PC-3 (cell line): ENCODE measurements at regions of chr5 and their contacts with region 1.

Region 1: DNA sequence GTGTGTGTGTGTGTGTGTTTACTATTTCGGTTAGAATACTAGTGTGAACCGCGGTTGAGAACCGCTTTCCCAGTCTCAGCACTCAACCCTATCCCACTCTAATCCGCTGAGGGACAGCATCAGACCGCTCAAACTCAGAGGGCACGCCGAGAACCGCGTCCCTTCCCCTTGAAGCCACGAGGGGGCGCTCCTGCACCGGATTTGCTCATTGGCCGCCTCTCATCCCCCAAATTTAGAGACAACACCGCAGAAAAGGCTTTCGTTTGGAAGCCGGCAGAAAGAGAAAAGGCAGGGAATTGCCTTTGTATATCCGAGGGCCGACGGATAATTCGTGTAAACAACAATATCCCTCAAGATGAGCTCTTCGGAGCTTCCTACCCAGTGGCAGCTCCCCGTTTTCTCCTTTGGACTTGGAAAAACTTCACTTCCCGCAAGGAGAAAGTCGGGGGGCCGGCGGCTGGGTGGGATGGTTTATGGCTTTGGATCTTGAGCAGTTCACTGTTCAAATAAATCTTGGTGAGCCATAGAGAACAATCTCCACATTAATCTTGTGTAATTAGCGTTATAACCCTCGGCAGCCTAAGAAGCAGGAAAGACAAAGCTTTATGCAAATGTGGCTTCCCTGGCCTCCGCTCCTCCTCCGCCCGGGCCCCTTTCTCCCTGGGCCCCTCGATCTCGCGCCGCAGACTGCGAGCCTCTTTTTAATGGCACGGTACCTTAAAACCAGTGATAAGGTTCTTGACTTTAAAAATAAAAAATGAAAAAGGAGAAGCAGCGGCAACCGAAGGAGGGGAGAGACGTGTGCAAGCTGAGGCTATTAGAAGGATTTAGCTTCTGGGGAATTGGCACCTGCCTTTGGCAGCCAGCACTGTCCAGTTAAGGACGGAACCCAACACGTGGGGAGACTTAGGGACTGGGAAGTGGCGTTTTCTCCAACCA is 296.8 kb downstream of the PARP8 start:
- DNase-seq: peak; percentile 56
- ATAC-seq: peak; percentile 95
- H3K4me3 ChIP-seq: peak overlapping the region; percentile 69
- H3K27ac ChIP-seq: no peak overlapping the region
- H3K4me1 ChIP-seq: no peaks in the 10 kb centered on the region
- H3K27me3 ChIP-seq: peaks cover under 1% of the 10 kb centered on the region; the same call in 1 of the 2 replicates
- CTCF ChIP-seq: peak; percentile 88

Region 2: GRCh38 chr5:51047369-51047768 is 84.2 kb after region 1 on chr5:
- CTCF ChIA-PET with region 1: no interaction called
- POLR2A ChIA-PET with region 1: no interaction called
- intact Hi-C with region 1: no loop called
- DNase-seq: no peak
- ATAC-seq: no peak
- H3K4me3 ChIP-seq: no peak overlapping the region
- H3K27ac ChIP-seq: no peak overlapping the region
- H3K4me1 ChIP-seq: no peaks in the 10 kb centered on the region
- H3K27me3 ChIP-seq: no peaks in the 10 kb centered on the region
- CTCF ChIP-seq: no peak

Region 3: DNA sequence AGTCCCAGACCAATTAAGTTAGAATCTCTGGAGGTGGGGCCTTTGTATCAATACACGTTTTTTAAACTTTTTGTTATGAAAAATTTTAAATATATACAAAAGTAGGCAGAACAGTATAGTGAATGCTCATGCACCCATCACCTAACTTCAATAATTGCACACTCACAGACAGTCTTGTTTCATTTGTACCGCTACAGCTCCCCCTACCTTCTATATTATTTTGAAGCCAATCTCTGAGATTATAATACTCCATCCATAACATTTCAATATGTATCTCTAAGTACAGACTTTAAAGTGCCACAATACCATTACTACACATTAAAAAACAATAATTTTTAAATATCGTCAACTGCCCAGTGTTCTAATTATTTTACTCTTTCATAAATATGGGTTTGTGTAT is 452.9 kb after region 1 on chr5:
- CTCF ChIA-PET with region 1: no interaction called
- POLR2A ChIA-PET with region 1: no interaction called
- intact Hi-C with region 1: loop called (anchors 5 kb)
- DNase-seq: peak; percentile 26
- ATAC-seq: peak; percentile 61
- H3K4me3 ChIP-seq: no peak overlapping the region
- H3K27ac ChIP-seq: no peak overlapping the region
- H3K4me1 ChIP-seq: no peaks in the 10 kb centered on the region
- H3K27me3 ChIP-seq: no peaks in the 10 kb centered on the region
- CTCF ChIP-seq: peak; percentile 46

Region 4: GRCh38 chr5:51846015-51846414 is 882.8 kb after region 1 on chr5:
- CTCF ChIA-PET with region 1: no interaction called
- POLR2A ChIA-PET with region 1: no interaction called
- intact Hi-C with region 1: loop called (anchors 5 kb)
- DNase-seq: peak; percentile 37
- ATAC-seq: no peak
- H3K4me3 ChIP-seq: no peak overlapping the region
- H3K27ac ChIP-seq: no peak overlapping the region
- H3K4me1 ChIP-seq: no peaks in the 10 kb centered on the region
- H3K27me3 ChIP-seq: no peaks in the 10 kb centered on the region
- CTCF ChIP-seq: no peak

Region 5: GRCh38 chr5:52007230-52007858 is 1044.1 kb after region 1 on chr5:
- CTCF ChIA-PET with region 1: no interaction called
- POLR2A ChIA-PET with region 1: no interaction called
- intact Hi-C with region 1: loop called (anchors 1 kb)
- DNase-seq: peak; percentile 51
- ATAC-seq: peak; percentile 76
- H3K4me3 ChIP-seq: no peak overlapping the region
- H3K27ac ChIP-seq: no peak overlapping the region
- H3K4me1 ChIP-seq: no peaks in the 10 kb centered on the region
- H3K27me3 ChIP-seq: no peaks in the 10 kb centered on the region
- CTCF ChIP-seq: peak; percentile 81

Region 6: GRCh38 chr5:52560366-52560765 is 1597.2 kb after region 1 on chr5:
- CTCF ChIA-PET with region 1: interaction called, 7 read pairs
- POLR2A ChIA-PET with region 1: no interaction called
- intact Hi-C with region 1: loop called (anchors 1 kb)
- DNase-seq: peak; percentile 56
- ATAC-seq: peak; percentile 76
- H3K4me3 ChIP-seq: no peak overlapping the region
- H3K27ac ChIP-seq: no peak overlapping the region
- H3K4me1 ChIP-seq: no peaks in the 10 kb centered on the region
- H3K27me3 ChIP-seq: peaks cover 42% of the 10 kb centered on the region
- CTCF ChIP-seq: peak; percentile 51